ENCODE measurements at regions of chr17 and their contacts with region 1.

Region 1: GRCh38 chr17:7632492-7632894 is 2.6 kb downstream of the SHBG start:
- DNase-seq: peak; percentile 71
- CTCF ChIP-seq: peak; percentile 45

Region 2: GRCh38 chr17:7644775-7645174 is 12.3 kb after region 1 on chr17:
- CTCF ChIA-PET with region 1: interaction called, 37 read pairs
- POLR2A ChIA-PET with region 1: no interaction called
- DNase-seq: no peak
- CTCF ChIP-seq: no peak

Region 3: GRCh38 chr17:7650509-7651096 is 18.1 kb after region 1 on chr17 and contains the start of gene ATP1B2:
- CTCF ChIA-PET with region 1: interaction called, 19 read pairs
- POLR2A ChIA-PET with region 1: interaction called, 11 read pairs
- DNase-seq: peak; percentile 83
- CTCF ChIP-seq: no peak

Region 4: GRCh38 chr17:7667656-7668406 is 35.3 kb after region 1 on chr17:
- CTCF ChIA-PET with region 1: interaction called, 13 read pairs
- POLR2A ChIA-PET with region 1: interaction called, 3 read pairs
- DNase-seq: no peak
- CTCF ChIP-seq: no peak